B cell (primary cell): ENCODE measurements at regions of chr2 and their contacts with region 1.

Region 1: DNA sequence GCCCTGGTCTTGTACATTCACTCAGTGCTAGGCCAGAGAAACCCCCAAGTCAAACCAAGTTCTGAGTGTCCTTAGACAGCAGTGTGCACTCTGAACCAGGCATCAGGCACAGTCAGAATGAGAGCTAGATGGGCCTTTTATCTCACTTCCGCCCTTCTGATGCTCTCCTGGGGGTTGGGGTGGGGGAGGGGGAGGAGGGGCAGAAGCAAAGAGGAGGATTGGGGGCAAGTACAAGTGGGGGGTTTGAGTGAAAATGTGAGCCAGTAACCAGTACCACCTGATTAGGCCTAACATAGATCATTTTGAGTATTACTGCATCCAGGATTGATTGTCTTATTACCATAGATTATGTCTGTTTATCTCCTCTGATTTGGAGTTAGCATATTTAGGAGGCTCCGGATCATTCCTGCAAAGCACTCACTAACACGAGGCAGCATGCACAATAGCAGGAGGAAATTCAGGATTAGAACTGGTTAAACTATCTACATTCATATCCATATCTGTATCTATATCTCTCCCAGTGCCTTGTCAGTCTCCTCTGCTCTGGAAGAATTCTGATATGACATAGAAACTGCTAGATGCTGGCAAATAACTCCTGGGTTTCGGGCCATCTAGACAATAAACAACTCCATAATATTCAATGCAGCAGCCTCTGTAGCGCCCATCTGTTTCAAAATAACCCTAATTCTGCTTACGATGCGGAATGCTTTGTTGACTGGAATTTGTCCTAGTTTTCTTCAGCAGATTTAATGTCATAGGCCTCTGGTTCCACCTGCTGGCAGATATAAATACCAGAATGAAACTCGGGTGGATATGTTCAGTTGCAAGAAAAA is 149.1 kb downstream of the RHBDD1 start:
- DNase-seq: peak; percentile 72
- ATAC-seq: peak; percentile 88
- H3K4me3 ChIP-seq: no peak overlapping the region
- H3K4me3 Mint-ChIP-seq: no peak overlapping the region
- H3K27ac ChIP-seq: peak overlapping the region; percentile 50 to 80
- H3K27ac Mint-ChIP-seq: peak overlapping the region; percentile 86
- H3K4me1 ChIP-seq: peaks cover 18 to 20% of the 10 kb centered on the region in 2 donors
- H3K4me1 Mint-ChIP-seq: peaks cover 26% of the 10 kb centered on the region
- H3K27me3 ChIP-seq: no peaks in the 10 kb centered on the region
- H3K27me3 Mint-ChIP-seq: no peaks in the 10 kb centered on the region
- CTCF ChIP-seq: peak; percentile 90

Region 2: GRCh38 chr2:225889446-225889850 is 1095.5 kb before region 1 on chr2:
- CTCF ChIA-PET with region 1: interaction called, 27 read pairs
- POLR2A ChIA-PET with region 1: interaction called, 4 read pairs
- intact Hi-C with region 1: no loop called
- DNase-seq: peak; percentile 40
- ATAC-seq: no peak
- H3K4me3 ChIP-seq: no peak overlapping the region
- H3K4me3 Mint-ChIP-seq: no peak overlapping the region
- H3K27ac ChIP-seq: no peak overlapping the region
- H3K27ac Mint-ChIP-seq: no peak overlapping the region
- H3K4me1 ChIP-seq: no peaks in the 10 kb centered on the region
- H3K4me1 Mint-ChIP-seq: no peaks in the 10 kb centered on the region
- H3K27me3 ChIP-seq: no peaks in the 10 kb centered on the region
- H3K27me3 Mint-ChIP-seq: peaks cover 9% of the 10 kb centered on the region
- CTCF ChIP-seq: peak; percentile 78

Region 3: DNA sequence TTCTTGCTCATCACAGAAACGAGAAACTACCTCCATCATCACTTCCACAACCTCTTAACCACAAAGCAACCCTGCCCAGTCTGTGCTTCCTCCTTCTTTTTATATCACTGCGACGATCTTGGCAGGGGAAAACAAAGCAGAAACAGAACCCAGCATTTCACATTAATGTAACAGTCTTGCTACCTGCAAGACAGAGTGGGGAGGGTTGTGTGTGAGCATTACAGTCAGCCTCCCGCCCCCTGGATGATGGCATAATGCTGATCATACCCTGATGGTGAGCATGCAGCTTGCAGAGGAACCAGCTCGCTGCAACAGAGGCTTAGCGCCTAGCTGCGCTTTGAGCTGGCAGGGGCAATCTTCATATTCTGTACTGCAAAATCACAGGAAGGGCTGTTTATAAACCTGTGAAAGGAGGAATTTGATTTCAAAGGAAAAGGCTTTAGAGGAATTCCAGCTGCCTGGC is 561.4 kb before region 1 on chr2:
- CTCF ChIA-PET with region 1: no interaction called
- POLR2A ChIA-PET with region 1: no interaction called
- intact Hi-C with region 1: loop called (anchors 2 kb)
- DNase-seq: peak; percentile 88
- ATAC-seq: peak; percentile 89
- H3K4me3 ChIP-seq: peak overlapping the region in 4 of 5 experiments; percentile 2 to 51 (median 24)
- H3K4me3 Mint-ChIP-seq: peak overlapping the region; percentile 62
- H3K27ac ChIP-seq: peak overlapping the region in 1 of 2 donors; percentile 5
- H3K27ac Mint-ChIP-seq: peak overlapping the region; percentile 27
- H3K4me1 ChIP-seq: peaks cover 14 to 44% of the 10 kb centered on the region in 2 donors
- H3K4me1 Mint-ChIP-seq: peaks cover 35% of the 10 kb centered on the region
- H3K27me3 ChIP-seq: peaks cover 0 to 3% (median 0%) of the 10 kb centered on the region in 4 experiments
- H3K27me3 Mint-ChIP-seq: peaks cover 3% of the 10 kb centered on the region
- CTCF ChIP-seq: no peak

Region 4: GRCh38 chr2:226813148-226813701 is 171.7 kb before region 1 on chr2:
- CTCF ChIA-PET with region 1: interaction called, 10 read pairs
- POLR2A ChIA-PET with region 1: no interaction called
- intact Hi-C with region 1: loop called (anchors 1 kb)
- DNase-seq: peak; percentile 40
- ATAC-seq: no peak
- H3K4me3 ChIP-seq: no peak overlapping the region
- H3K4me3 Mint-ChIP-seq: no peak overlapping the region
- H3K27ac ChIP-seq: no peak overlapping the region
- H3K27ac Mint-ChIP-seq: no peak overlapping the region
- H3K4me1 ChIP-seq: no peaks in the 10 kb centered on the region
- H3K4me1 Mint-ChIP-seq: no peaks in the 10 kb centered on the region
- H3K27me3 ChIP-seq: peaks cover 0 to 13% (median 5%) of the 10 kb centered on the region in 4 experiments
- H3K27me3 Mint-ChIP-seq: peaks cover 27% of the 10 kb centered on the region
- CTCF ChIP-seq: peak; percentile 16

Region 5: DNA sequence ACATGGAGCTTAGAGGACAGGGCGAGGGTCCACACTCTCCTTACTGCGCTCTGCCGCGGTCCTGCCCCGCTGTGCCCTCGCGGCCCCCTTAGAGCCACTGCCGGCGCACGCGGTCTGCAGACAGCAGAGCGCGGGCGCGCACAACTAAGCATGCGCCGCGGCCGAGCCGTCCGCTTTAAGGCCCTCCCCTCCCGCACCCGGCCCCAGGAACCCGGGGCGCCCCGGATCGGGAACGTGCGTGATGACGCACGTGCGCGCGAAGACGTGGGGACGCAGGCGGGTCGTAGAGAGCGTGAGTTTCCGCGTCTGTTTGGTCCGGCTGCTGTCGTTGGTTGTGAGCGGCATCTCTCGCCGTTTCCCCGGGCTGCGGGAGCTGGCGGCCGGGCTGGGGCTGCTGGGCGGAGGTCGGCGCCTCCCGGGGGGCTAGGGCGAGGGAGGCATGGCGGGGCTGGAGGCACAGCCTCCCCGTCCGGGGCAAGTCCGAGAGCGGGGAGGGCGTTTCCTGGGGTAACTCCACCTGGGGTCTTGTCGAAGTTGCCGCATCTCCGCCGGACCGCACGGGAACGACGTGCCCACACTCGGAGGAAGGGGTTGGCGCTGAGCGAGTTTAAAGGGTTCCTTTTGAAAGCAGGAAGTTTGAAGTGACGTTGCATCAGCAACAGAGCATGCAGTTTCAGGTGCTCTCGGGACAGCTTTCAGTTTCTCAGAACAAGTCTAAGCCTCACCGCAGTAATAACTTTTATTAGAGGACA is 149.0 kb before region 1 on chr2 and contains the start of gene RHBDD1:
- CTCF ChIA-PET with region 1: interaction called, 12 read pairs
- POLR2A ChIA-PET with region 1: interaction called, 11 read pairs
- intact Hi-C with region 1: loop called (anchors 1 kb)
- DNase-seq: peak; percentile 98
- ATAC-seq: peak; percentile 84
- H3K4me3 ChIP-seq: peak within 1 kb of the TSS; percentile 63 to 89 (median 81)
- H3K4me3 Mint-ChIP-seq: peak within 1 kb of the TSS; percentile 98
- H3K27ac ChIP-seq: peak within 1 kb of the TSS; percentile 95 to 99
- H3K27ac Mint-ChIP-seq: peak within 1 kb of the TSS; percentile 100
- H3K4me1 ChIP-seq: peaks cover 46 to 50% of the 10 kb centered on the region in 2 donors
- H3K4me1 Mint-ChIP-seq: peaks cover 52% of the 10 kb centered on the region
- H3K27me3 ChIP-seq: no peaks in the 10 kb centered on the region
- H3K27me3 Mint-ChIP-seq: no peaks in the 10 kb centered on the region
- CTCF ChIP-seq: no peak
- total RNA-seq, gene RHBDD1: 128 and 142 TPM in 2 replicates

Region 6: GRCh38 chr2:226906163-226906693 is 78.7 kb before region 1 on chr2:
- CTCF ChIA-PET with region 1: interaction called, 5 read pairs
- POLR2A ChIA-PET with region 1: interaction called, 3 read pairs
- intact Hi-C with region 1: loop called (anchors 2 kb)
- DNase-seq: peak; percentile 87
- ATAC-seq: peak; percentile 81
- H3K4me3 ChIP-seq: peak overlapping the region; percentile 36 to 60 (median 53)
- H3K4me3 Mint-ChIP-seq: peak overlapping the region; percentile 77
- H3K27ac ChIP-seq: peak overlapping the region; percentile 97 to 99
- H3K27ac Mint-ChIP-seq: peak overlapping the region; percentile 96
- H3K4me1 ChIP-seq: peaks cover 83 to 91% of the 10 kb centered on the region in 2 donors
- H3K4me1 Mint-ChIP-seq: peaks cover 90% of the 10 kb centered on the region
- H3K27me3 ChIP-seq: no peaks in the 10 kb centered on the region
- H3K27me3 Mint-ChIP-seq: no peaks in the 10 kb centered on the region
- CTCF ChIP-seq: no peak

Region 7: GRCh38 chr2:226963528-226963927 is 21.4 kb before region 1 on chr2:
- CTCF ChIA-PET with region 1: no interaction called
- POLR2A ChIA-PET with region 1: no interaction called
- intact Hi-C with region 1: no loop called
- DNase-seq: no peak
- ATAC-seq: no peak
- H3K4me3 ChIP-seq: no peak overlapping the region
- H3K4me3 Mint-ChIP-seq: no peak overlapping the region
- H3K27ac ChIP-seq: no peak overlapping the region
- H3K27ac Mint-ChIP-seq: no peak overlapping the region
- H3K4me1 ChIP-seq: no peaks in the 10 kb centered on the region
- H3K4me1 Mint-ChIP-seq: peaks cover 3% of the 10 kb centered on the region
- H3K27me3 ChIP-seq: no peaks in the 10 kb centered on the region
- H3K27me3 Mint-ChIP-seq: no peaks in the 10 kb centered on the region
- CTCF ChIP-seq: no peak